Naive thymus-derived CD4-positive, alpha-beta T cell (primary cell): ENCODE measurements at regions of chr17 and their contacts with region 1.

Region 1: GRCh38 chr17:35022536-35023063 is 40.9 kb downstream of the RFFL start:
- DNase-seq: peak; percentile 37 to 65 (median 56)
- ATAC-seq: peak; percentile 99
- H3K4me3 ChIP-seq: peak overlapping the region; percentile 18
- H3K4me3 Mint-ChIP-seq: peak overlapping the region; percentile 10 to 84 (median 70)
- H3K27ac ChIP-seq: peak overlapping the region; percentile 74
- H3K27ac Mint-ChIP-seq: peak overlapping the region; percentile 92 to 97 (median 96)
- H3K4me1 ChIP-seq: peaks cover 28 to 36% of the 10 kb centered on the region in 2 donors
- H3K4me1 Mint-ChIP-seq: peaks cover 27 to 79% (median 60%) of the 10 kb centered on the region in 7 donors
- H3K27me3 ChIP-seq: no peaks in the 10 kb centered on the region
- H3K27me3 Mint-ChIP-seq: no peaks in the 10 kb centered on the region

Region 2: GRCh38 chr17:34892461-34893249 is 129.9 kb before region 1 on chr17:
- CTCF ChIA-PET with region 1: no interaction called
- POLR2A ChIA-PET with region 1: no interaction called
- intact Hi-C with region 1: no loop called
- DNase-seq: peak in 6 of 9 donors; percentile 10 to 38 (median 30)
- ATAC-seq: no peak
- H3K4me3 ChIP-seq: no peak overlapping the region
- H3K4me3 Mint-ChIP-seq: no peak overlapping the region
- H3K27ac ChIP-seq: no peak overlapping the region
- H3K27ac Mint-ChIP-seq: no peak overlapping the region
- H3K4me1 ChIP-seq: no peaks in the 10 kb centered on the region
- H3K4me1 Mint-ChIP-seq: peaks cover 0 to 2% (median 0%) of the 10 kb centered on the region in 7 donors
- H3K27me3 ChIP-seq: no peaks in the 10 kb centered on the region
- H3K27me3 Mint-ChIP-seq: peaks cover 20 to 53% (median 24%) of the 10 kb centered on the region in 5 donors

Region 3: DNA sequence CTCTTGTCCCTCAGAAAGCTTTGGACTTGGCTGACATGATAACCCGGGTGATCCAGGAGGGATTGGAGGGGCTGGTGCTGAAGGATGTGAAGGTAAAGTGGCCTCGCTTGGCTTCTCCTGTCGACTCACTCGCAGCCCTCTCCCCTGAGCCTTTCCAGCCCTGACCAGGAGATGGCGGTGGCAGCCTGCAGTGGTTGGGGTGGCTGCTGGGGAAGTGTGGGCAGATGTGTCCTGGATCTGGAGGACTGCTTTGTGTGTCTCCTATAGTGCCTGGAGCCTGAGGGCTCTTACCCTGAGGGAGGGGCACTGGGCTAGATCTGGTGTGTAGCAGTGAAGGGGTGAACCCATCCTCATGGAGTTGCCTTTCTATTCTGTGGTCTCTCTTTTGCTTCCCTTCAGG is 24.4 kb before region 1 on chr17:
- CTCF ChIA-PET with region 1: interaction called, 6 read pairs
- POLR2A ChIA-PET with region 1: interaction called, 12 read pairs
- intact Hi-C with region 1: no loop called
- DNase-seq: peak; percentile 62 to 82 (median 76)
- ATAC-seq: peak; percentile 96
- H3K4me3 ChIP-seq: no peak overlapping the region
- H3K4me3 Mint-ChIP-seq: no peak overlapping the region
- H3K27ac ChIP-seq: no peak overlapping the region
- H3K27ac Mint-ChIP-seq: peak overlapping the region; percentile 60 to 89 (median 82)
- H3K4me1 ChIP-seq: no peaks in the 10 kb centered on the region
- H3K4me1 Mint-ChIP-seq: peaks cover 5 to 10% (median 6%) of the 10 kb centered on the region in 7 donors
- H3K27me3 ChIP-seq: no peaks in the 10 kb centered on the region
- H3K27me3 Mint-ChIP-seq: no peaks in the 10 kb centered on the region

Region 4: GRCh38 chr17:35041390-35041789 is 18.8 kb after region 1 on chr17:
- CTCF ChIA-PET with region 1: interaction called, 7 read pairs
- POLR2A ChIA-PET with region 1: interaction called, 27 read pairs
- intact Hi-C with region 1: loop called (anchors 1 to 2 kb)
- DNase-seq: no peak
- ATAC-seq: no peak
- H3K4me3 ChIP-seq: no peak overlapping the region
- H3K4me3 Mint-ChIP-seq: no peak overlapping the region
- H3K27ac ChIP-seq: no peak overlapping the region
- H3K27ac Mint-ChIP-seq: peak overlapping the region in 4 of 9 donors; percentile 12 to 96 (median 56)
- H3K4me1 ChIP-seq: peaks cover 36 to 39% of the 10 kb centered on the region in 2 donors
- H3K4me1 Mint-ChIP-seq: peaks cover 25 to 81% (median 68%) of the 10 kb centered on the region in 7 donors
- H3K27me3 ChIP-seq: no peaks in the 10 kb centered on the region
- H3K27me3 Mint-ChIP-seq: no peaks in the 10 kb centered on the region

Region 5: GRCh38 chr17:35046740-35047283 is 24.2 kb after region 1 on chr17:
- CTCF ChIA-PET with region 1: interaction called, 10 read pairs
- POLR2A ChIA-PET with region 1: interaction called, 27 read pairs
- intact Hi-C with region 1: loop called (anchors 1 to 2 kb)
- DNase-seq: peak in 8 of 9 donors; percentile 54 to 82 (median 70)
- ATAC-seq: peak; percentile 77
- H3K4me3 ChIP-seq: peak overlapping the region; percentile 45
- H3K4me3 Mint-ChIP-seq: peak overlapping the region; percentile 71 to 92 (median 84)
- H3K27ac ChIP-seq: peak overlapping the region; percentile 69
- H3K27ac Mint-ChIP-seq: peak overlapping the region; percentile 85 to 97 (median 93)
- H3K4me1 ChIP-seq: peaks cover 79 to 81% of the 10 kb centered on the region in 2 donors
- H3K4me1 Mint-ChIP-seq: peaks cover 52 to 84% (median 74%) of the 10 kb centered on the region in 7 donors
- H3K27me3 ChIP-seq: no peaks in the 10 kb centered on the region
- H3K27me3 Mint-ChIP-seq: no peaks in the 10 kb centered on the region

Region 6: GRCh38 chr17:35052241-35052610 is 29.6 kb after region 1 on chr17:
- CTCF ChIA-PET with region 1: interaction called, 10 read pairs
- POLR2A ChIA-PET with region 1: interaction called, 27 read pairs
- intact Hi-C with region 1: loop called in 1 of 2 experiments (anchors 2 kb)
- DNase-seq: no peak
- ATAC-seq: no peak
- H3K4me3 ChIP-seq: peak overlapping the region; percentile 21
- H3K4me3 Mint-ChIP-seq: peak overlapping the region; percentile 6 to 82 (median 74)
- H3K27ac ChIP-seq: peak overlapping the region; percentile 68
- H3K27ac Mint-ChIP-seq: peak overlapping the region; percentile 83 to 99 (median 94)
- H3K4me1 ChIP-seq: peaks cover 60 to 68% of the 10 kb centered on the region in 2 donors
- H3K4me1 Mint-ChIP-seq: peaks cover 59 to 84% (median 73%) of the 10 kb centered on the region in 7 donors
- H3K27me3 ChIP-seq: no peaks in the 10 kb centered on the region
- H3K27me3 Mint-ChIP-seq: no peaks in the 10 kb centered on the region